ENCODE measurements at regions of chr1 and their contacts with region 1.

Region 1: DNA sequence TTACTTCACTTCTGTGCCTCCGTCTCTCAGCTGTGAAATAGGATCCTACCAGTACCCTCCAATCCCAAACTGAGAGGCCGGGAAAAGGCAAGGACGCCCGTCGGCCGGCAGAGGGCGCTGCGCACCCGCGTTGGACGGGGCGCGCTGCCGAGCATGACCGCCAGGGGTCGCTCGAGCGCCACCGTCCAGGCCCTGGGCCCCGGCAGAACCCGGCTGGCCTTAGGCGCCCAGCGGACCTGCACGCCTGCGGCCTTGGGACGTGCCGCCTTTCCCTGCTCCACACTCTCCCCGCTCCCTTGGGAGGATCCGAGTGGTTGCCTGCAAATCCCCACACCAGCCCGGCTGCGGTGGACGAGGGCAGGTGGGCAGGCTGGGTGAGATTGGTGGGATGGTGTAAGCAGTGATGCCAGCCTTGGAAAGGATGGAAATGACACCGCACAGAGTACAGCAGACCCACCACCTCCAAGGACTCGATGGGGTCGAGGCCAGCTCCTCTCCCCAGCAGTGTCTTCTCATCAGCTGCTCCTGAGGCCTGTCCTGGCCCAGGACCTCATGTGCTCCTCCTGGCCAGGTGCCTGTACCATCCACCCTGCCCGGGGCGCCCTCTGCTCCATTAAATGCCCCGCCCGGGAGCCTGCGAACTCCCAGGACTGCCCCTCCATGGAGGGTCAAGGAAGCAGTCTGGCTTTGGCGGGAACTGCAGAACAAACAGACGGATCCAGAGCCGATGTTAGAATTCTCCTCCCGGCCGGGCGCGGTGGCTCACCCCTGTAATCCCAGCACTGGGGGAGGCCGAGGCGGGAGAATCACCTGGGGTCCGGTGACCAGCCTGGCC is 47.4 kb upstream of the LBR start:
- DNase-seq: peak; percentile 60
- H3K4me3 Mint-ChIP-seq: no peak overlapping the region
- H3K27ac Mint-ChIP-seq: no peak overlapping the region
- H3K4me1 Mint-ChIP-seq: peaks cover 37% of the 10 kb centered on the region
- H3K27me3 Mint-ChIP-seq: no peaks in the 10 kb centered on the region

Region 2: GRCh38 chr1:225554216-225554812 is 79.1 kb after region 1 on chr1:
- CTCF ChIA-PET with region 1: interaction called, 3 read pairs
- intact Hi-C with region 1: loop called (anchors 1 kb)
- DNase-seq: no peak
- H3K4me3 Mint-ChIP-seq: no peak overlapping the region
- H3K27ac Mint-ChIP-seq: no peak overlapping the region
- H3K4me1 Mint-ChIP-seq: no peaks in the 10 kb centered on the region
- H3K27me3 Mint-ChIP-seq: peaks cover 2% of the 10 kb centered on the region

Region 3: DNA sequence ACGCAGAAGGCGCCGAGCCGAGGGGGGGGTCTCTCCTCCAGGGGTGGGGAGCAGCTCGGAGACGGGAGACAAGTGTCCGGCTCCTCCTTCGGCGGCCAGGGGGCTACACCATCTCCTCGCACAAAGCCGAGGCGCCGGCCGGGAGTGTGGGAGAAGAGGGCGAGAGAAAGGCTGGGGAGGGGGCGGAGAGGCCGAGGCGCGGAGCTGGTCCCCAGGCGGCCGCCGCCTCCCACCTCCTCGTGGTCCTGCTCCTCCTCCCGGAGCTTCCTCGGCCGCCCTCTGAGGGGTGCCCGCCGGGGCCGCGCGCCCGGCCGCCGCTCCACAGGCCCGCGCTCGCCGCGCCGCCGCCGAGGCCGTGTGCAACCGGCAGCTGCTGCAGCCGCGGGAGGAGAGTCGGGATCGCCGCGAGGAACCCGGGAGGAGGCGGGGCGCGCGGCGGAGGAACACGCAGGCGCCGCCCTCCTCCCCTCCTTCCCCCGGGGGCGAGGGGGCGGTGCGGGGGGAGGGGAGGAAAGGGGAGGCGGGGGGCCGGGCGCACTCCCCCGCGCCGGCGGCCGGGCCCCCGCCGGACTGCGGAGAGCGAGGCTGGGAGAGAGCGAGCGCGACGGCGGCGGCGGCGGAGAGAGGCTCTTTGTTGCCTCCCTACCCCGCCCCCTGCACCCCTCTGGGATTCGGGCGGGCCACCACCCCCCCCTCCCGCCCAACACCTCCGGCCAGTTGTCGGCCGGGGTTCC is 177.7 kb after region 1 on chr1 and contains the start of gene ENAH:
- CTCF ChIA-PET with region 1: interaction called, 4 read pairs
- intact Hi-C with region 1: loop called (anchors 2 kb)
- DNase-seq: peak; percentile 52
- H3K4me3 Mint-ChIP-seq: peak within 1 kb of the TSS; percentile 85
- H3K27ac Mint-ChIP-seq: peak within 1 kb of the TSS; percentile 50
- H3K4me1 Mint-ChIP-seq: peaks cover 10% of the 10 kb centered on the region
- H3K27me3 Mint-ChIP-seq: peaks cover 24% of the 10 kb centered on the region
- total RNA-seq, gene ENAH: 0.91 to 2.0 TPM

Region 4: GRCh38 chr1:225772323-225772768 is 297.1 kb after region 1 on chr1:
- CTCF ChIA-PET with region 1: interaction called, 25 read pairs
- intact Hi-C with region 1: loop called (anchors 1 kb)
- DNase-seq: peak; percentile 67
- H3K4me3 Mint-ChIP-seq: no peak overlapping the region
- H3K27ac Mint-ChIP-seq: no peak overlapping the region
- H3K4me1 Mint-ChIP-seq: no peaks in the 10 kb centered on the region
- H3K27me3 Mint-ChIP-seq: no peaks in the 10 kb centered on the region

Region 5: GRCh38 chr1:225845571-225846259 is 370.5 kb after region 1 on chr1:
- CTCF ChIA-PET with region 1: interaction called, 4 read pairs
- intact Hi-C with region 1: loop called (anchors 5 kb)
- DNase-seq: peak; percentile 49
- H3K4me3 Mint-ChIP-seq: no peak overlapping the region
- H3K27ac Mint-ChIP-seq: no peak overlapping the region
- H3K4me1 Mint-ChIP-seq: peaks cover 36% of the 10 kb centered on the region
- H3K27me3 Mint-ChIP-seq: no peaks in the 10 kb centered on the region

Region 6: GRCh38 chr1:225977937-225978748 is 502.9 kb after region 1 on chr1:
- CTCF ChIA-PET with region 1: interaction called, 17 read pairs
- intact Hi-C with region 1: loop called (anchors 1 kb)
- DNase-seq: no peak
- H3K4me3 Mint-ChIP-seq: no peak overlapping the region
- H3K27ac Mint-ChIP-seq: no peak overlapping the region
- H3K4me1 Mint-ChIP-seq: peaks cover 7% of the 10 kb centered on the region
- H3K27me3 Mint-ChIP-seq: no peaks in the 10 kb centered on the region

Region 7: GRCh38 chr1:225987491-225988316 is 512.5 kb after region 1 on chr1:
- CTCF ChIA-PET with region 1: interaction called, 18 read pairs
- intact Hi-C with region 1: no loop called
- DNase-seq: no peak
- H3K4me3 Mint-ChIP-seq: no peak overlapping the region
- H3K27ac Mint-ChIP-seq: peak overlapping the region; percentile 56
- H3K4me1 Mint-ChIP-seq: peaks cover 30% of the 10 kb centered on the region
- H3K27me3 Mint-ChIP-seq: no peaks in the 10 kb centered on the region

Measured in activated naive CD4-positive, alpha-beta T cell treated with anti-CD3 and anti-CD28 coated beads for 36 hours (primary cell).